Right lobe of liver (tissue), 6 donors: ENCODE measurements at regions of chr20 and their contacts with region 1.

Region 1: DNA sequence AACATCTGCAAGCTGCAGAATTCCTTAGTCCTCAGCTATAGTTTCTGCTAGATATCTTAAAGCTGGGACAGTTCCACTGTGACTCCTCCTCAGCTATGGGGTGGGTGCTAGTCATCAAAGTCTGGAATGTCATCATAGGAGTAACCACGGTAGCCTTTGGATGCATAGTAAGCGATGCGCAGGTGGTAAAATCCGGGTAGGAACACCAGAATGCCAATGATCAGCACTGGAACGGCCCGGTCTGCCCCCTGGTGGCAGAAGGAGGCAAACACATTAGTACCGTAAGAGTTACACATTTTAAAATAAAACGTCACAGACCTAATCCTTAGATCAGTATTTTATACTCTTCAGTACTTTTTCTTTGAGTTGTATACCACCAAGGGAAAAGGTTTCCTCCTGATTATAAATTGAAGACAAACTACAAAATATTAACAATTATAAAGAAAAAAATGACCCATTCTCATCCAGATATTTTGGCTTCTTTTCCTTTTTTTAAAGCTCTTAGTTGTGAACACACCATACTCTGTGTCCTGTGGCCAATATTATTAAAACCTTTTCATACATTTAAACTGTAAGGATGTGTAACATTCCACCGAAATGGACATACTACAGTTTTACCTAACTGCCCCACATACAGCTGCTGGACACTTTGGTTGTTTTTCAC is 18.9 kb downstream of the PCNA start:
- DNase-seq: peak; percentile 71 to 78 (median 77)
- ATAC-seq: peak; percentile 90 to 96 (median 94)
- H3K4me3 ChIP-seq: no peak overlapping the region
- H3K27ac ChIP-seq: no peak overlapping the region
- H3K4me1 ChIP-seq: no peaks in the 10 kb centered on the region
- H3K27me3 ChIP-seq: no peaks in the 10 kb centered on the region
- CTCF ChIP-seq: peak; percentile 91 to 94 (median 92)
- POLR2A ChIP-seq: no peak

Region 2: DNA sequence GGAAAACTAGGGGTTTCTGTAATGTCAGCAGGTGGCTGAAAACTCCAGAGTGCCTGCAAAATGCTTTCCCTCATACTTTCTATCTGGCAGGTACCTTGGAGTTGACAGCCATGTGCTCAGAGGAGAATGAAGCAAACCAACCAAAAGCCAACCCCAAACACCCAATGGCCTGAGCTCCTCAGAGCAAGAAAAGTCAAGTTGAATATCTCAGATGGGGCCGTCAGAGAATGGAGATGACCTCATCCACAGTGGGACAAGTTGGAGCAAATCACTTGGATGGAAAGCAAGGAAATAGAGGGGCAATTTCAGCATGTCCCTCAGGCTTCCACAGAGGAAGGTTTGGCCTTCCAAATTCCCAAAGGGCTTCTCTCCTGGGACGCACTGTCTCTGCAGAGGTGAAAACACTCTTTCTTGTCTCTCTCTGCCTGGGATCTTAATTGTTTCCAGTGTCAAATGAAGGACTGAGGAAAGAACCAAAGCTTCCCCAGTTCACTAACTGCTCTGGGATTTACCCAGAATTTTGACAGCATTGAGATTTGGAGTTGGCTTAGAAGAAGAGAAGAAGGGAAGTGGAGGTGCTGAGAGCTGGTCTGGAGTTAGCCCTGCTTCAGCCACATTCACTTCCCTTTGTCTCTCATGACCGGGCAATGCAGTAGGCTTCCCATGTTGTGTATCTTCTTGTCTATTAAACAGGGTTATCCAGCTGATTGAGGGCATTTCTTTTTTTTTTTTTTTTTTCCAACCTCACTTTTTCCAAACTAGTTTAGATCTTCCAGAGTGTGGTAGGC is 336.9 kb before region 1 on chr20:
- intact Hi-C with region 1: loop called in 1 of 2 experiments (anchors 5 kb)
- DNase-seq: no peak
- ATAC-seq: peak in 2 of 4 donors; percentile 37 to 38
- H3K4me3 ChIP-seq: no peak overlapping the region
- H3K27ac ChIP-seq: no peak overlapping the region
- H3K4me1 ChIP-seq: no peaks in the 10 kb centered on the region
- H3K27me3 ChIP-seq: no peaks in the 10 kb centered on the region
- CTCF ChIP-seq: no peak
- POLR2A ChIP-seq: no peak

Region 3: GRCh38 chr20:4787069-4787468 is 313.7 kb before region 1 on chr20:
- intact Hi-C with region 1: loop called in 1 of 2 experiments (anchors 10 kb)
- DNase-seq: no peak
- ATAC-seq: no peak
- H3K4me3 ChIP-seq: no peak overlapping the region
- H3K27ac ChIP-seq: no peak overlapping the region
- H3K4me1 ChIP-seq: no peaks in the 10 kb centered on the region
- H3K27me3 ChIP-seq: no peaks in the 10 kb centered on the region
- CTCF ChIP-seq: no peak
- POLR2A ChIP-seq: no peak